ENCODE measurements at regions of chr15 and their contacts with region 1.

Region 1: GRCh38 chr15:91022075-91022835 is at the start of gene VPS33B:
- DNase-seq: peak; percentile 87
- H3K4me3 Mint-ChIP-seq: peak within 1 kb of the TSS; percentile 89
- H3K27ac Mint-ChIP-seq: peak within 1 kb of the TSS; percentile 90
- H3K4me1 Mint-ChIP-seq: peaks cover 32% of the 10 kb centered on the region
- H3K27me3 Mint-ChIP-seq: no peaks in the 10 kb centered on the region
- total RNA-seq, gene VPS33B: 26.4 to 26.5 TPM

Region 2: GRCh38 chr15:90994417-90995311 is 27.6 kb before region 1 on chr15 and contains the start of gene PRC1:
- CTCF ChIA-PET with region 1: interaction called, 3 read pairs
- POLR2A ChIA-PET with region 1: interaction called, 5 read pairs
- intact Hi-C with region 1: loop called (anchors 1 kb)
- DNase-seq: peak; percentile 99
- H3K4me3 Mint-ChIP-seq: peak within 1 kb of the TSS; percentile 100
- H3K27ac Mint-ChIP-seq: peak within 1 kb of the TSS; percentile 98
- H3K4me1 Mint-ChIP-seq: peaks cover 25% of the 10 kb centered on the region
- H3K27me3 Mint-ChIP-seq: peaks cover 2% of the 10 kb centered on the region
- total RNA-seq, gene PRC1: 151 to 158 TPM

Region 3: GRCh38 chr15:91032919-91033803 is 10.9 kb after region 1 on chr15:
- CTCF ChIA-PET with region 1: interaction called, 24 read pairs
- POLR2A ChIA-PET with region 1: interaction called, 4 read pairs
- intact Hi-C with region 1: no loop called
- DNase-seq: peak; percentile 77
- H3K4me3 Mint-ChIP-seq: no peak overlapping the region
- H3K27ac Mint-ChIP-seq: no peak overlapping the region
- H3K4me1 Mint-ChIP-seq: peaks cover 4% of the 10 kb centered on the region
- H3K27me3 Mint-ChIP-seq: no peaks in the 10 kb centered on the region

Region 4: DNA sequence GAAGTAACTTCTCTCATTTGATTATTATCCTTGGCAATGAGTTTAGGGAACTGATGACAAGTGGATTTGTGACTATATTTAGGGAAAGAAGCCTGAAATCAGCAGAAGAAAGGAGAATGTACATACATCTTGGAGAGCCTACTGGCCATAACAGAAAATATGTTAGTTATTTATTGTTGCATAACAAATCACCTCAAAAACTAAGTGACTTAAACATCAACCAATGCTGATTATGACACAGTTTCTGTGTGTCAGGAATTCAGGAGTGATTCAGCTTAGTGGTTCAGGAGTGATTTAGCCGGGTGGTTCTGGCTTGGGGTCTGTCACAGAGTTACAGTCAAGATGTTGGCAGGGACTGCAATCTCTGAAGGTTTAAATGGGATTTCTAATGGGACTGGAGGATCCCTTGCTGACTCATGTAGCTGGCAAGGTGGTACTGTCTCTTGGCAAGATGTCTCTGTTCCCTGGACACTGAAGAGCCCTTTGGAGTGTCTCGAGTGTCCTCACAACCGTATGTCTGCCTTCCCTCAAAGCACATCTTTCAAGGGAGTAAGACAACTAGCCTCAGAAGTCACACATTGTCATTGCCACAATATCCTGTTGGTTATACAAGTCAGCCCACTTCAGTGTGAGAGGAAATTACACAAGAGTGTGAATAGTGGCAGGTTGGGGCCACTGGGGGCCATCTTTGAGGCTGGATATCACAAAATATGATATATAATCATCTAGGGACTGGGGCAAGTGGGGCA is 326.7 kb after region 1 on chr15:
- CTCF ChIA-PET with region 1: no interaction called
- POLR2A ChIA-PET with region 1: no interaction called
- intact Hi-C with region 1: no loop called
- DNase-seq: peak; percentile 21
- H3K4me3 Mint-ChIP-seq: no peak overlapping the region
- H3K27ac Mint-ChIP-seq: no peak overlapping the region
- H3K4me1 Mint-ChIP-seq: peaks cover 14% of the 10 kb centered on the region
- H3K27me3 Mint-ChIP-seq: no peaks in the 10 kb centered on the region

Measured in activated CD4-positive, alpha-beta memory T cell treated with anti-CD3 and anti-CD28 coated beads for 36 hours (primary cell).